Aorta (tissue), 5 donors: ENCODE measurements at regions of chr13 and their contacts with region 1.

Region 1: GRCh38 chr13:97221989-97222700 is at the start of gene MBNL2:
- DNase-seq: peak; percentile 94 to 96
- ATAC-seq: peak; percentile 94
- H3K4me3 ChIP-seq: peak within 1 kb of the TSS; percentile 96 to 100
- H3K27ac ChIP-seq: peak within 1 kb of the TSS; percentile 68 to 91
- H3K4me1 ChIP-seq: peaks cover 0 to 4% of the 10 kb centered on the region in 2 donors
- H3K27me3 ChIP-seq: no peaks in the 10 kb centered on the region
- total RNA-seq, gene MBNL2: 73.4 to 79.4 TPM

Region 2: GRCh38 chr13:97257800-97258799 is 36.0 kb after region 1 on chr13:
- intact Hi-C with region 1: loop called (anchors 2 to 5 kb)
- DNase-seq: peak; percentile 59 to 82
- ATAC-seq: peak; percentile 42
- H3K4me3 ChIP-seq: no peak overlapping the region
- H3K27ac ChIP-seq: peak overlapping the region; percentile 39 to 83
- H3K4me1 ChIP-seq: peaks cover 24 to 26% of the 10 kb centered on the region in 2 donors
- H3K27me3 ChIP-seq: no peaks in the 10 kb centered on the region

Region 3: GRCh38 chr13:97274829-97275252 is 52.7 kb after region 1 on chr13:
- intact Hi-C with region 1: loop called in 1 of 2 experiments (anchors 5 kb)
- DNase-seq: no peak
- ATAC-seq: peak; percentile 40
- H3K4me3 ChIP-seq: no peak overlapping the region
- H3K27ac ChIP-seq: peak overlapping the region in 1 of 2 donors; percentile 18
- H3K4me1 ChIP-seq: peaks cover 7 to 22% of the 10 kb centered on the region in 2 donors
- H3K27me3 ChIP-seq: no peaks in the 10 kb centered on the region

Region 4: GRCh38 chr13:97339019-97339987 is 117.2 kb after region 1 on chr13:
- intact Hi-C with region 1: loop called (anchors 2 to 5 kb)
- DNase-seq: peak; percentile 68 to 74
- ATAC-seq: peak; percentile 76
- H3K4me3 ChIP-seq: no peak overlapping the region
- H3K27ac ChIP-seq: peak overlapping the region in 1 of 2 donors; percentile 93
- H3K4me1 ChIP-seq: peaks cover 5 to 6% of the 10 kb centered on the region in 2 donors
- H3K27me3 ChIP-seq: no peaks in the 10 kb centered on the region

Region 5: DNA sequence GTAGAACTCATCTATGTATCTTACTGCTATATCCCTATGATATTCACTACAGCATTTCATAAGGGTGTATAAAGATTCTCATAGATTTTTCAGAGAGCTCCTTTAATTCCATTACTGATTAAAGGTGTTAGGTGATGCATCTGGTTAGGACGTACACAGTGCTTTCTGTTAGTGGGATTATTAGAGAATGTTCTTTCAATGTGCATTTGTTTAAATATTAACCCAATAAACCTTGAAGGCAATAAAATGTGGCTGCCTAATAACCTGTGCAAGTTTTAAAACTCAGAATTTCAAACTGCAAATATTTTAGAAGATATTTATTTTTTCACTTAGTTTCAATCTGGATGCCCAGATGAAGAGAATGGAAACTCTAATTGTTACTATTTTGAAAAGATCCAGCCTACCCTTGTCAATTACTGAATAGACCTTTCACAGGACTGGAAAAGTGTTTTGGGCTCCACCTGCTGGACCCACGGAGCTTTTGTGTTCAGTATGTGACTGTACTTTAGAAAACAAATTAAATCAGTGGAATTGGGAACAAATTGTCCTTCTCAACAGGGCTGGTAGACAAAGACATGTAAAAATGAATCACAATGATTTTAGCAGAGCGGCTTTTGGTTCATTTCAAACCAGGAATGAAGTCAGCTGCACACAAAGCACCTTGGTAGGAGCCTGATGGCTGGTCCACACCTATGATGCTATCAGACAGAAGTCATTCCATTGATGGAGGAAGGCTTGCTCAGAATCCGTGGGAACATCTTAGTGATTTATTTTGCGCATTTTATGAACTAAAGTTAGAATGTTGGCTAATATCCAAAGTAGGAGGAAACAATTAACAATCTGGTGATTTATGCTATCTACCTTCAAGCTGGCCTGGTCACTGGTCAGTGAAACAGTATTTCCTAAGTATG is 122.4 kb after region 1 on chr13:
- intact Hi-C with region 1: loop called (anchors 2 to 5 kb)
- DNase-seq: peak; percentile 60 to 85
- ATAC-seq: peak; percentile 75
- H3K4me3 ChIP-seq: no peak overlapping the region
- H3K27ac ChIP-seq: no peak overlapping the region
- H3K4me1 ChIP-seq: peaks cover 0 to 3% of the 10 kb centered on the region in 2 donors
- H3K27me3 ChIP-seq: no peaks in the 10 kb centered on the region

Region 6: GRCh38 chr13:97359181-97360057 is 137.3 kb after region 1 on chr13:
- intact Hi-C with region 1: loop called in 1 of 2 experiments (anchors 5 kb)
- DNase-seq: no peak
- ATAC-seq: peak; percentile 90
- H3K4me3 ChIP-seq: no peak overlapping the region
- H3K27ac ChIP-seq: no peak overlapping the region
- H3K4me1 ChIP-seq: no peaks in the 10 kb centered on the region
- H3K27me3 ChIP-seq: no peaks in the 10 kb centered on the region